ENCODE measurements at regions of chr3 and their contacts with region 1.

Region 1: DNA sequence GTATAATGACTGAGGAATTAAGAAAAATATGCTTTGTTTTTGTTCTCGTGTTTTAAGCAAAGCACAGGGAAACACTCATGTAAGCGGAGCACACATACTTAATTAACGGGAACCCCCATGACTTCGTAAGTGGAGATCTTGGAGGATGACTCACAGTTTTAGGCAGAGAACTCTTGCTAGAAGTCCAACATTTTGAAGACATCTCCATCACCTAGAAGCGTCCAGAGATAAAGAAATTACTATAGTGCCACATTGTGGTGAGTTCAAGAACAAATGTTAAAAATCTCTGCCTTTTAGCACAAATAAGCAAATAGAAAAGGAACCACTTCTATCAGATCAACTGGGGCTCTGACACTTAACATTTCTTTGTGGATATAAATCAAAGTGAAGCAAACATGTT is 194.1 kb upstream of the ARHGEF26 start:
- DNase-seq: peak in 1 of 2 experiments; percentile 3
- H3K4me3 ChIP-seq: no peak overlapping the region
- H3K4me3 Mint-ChIP-seq: no peak overlapping the region
- H3K27ac Mint-ChIP-seq: no peak overlapping the region
- H3K4me1 ChIP-seq: no peaks in the 10 kb centered on the region
- H3K4me1 Mint-ChIP-seq: no peaks in the 10 kb centered on the region
- H3K27me3 ChIP-seq: no peaks in the 10 kb centered on the region
- H3K27me3 Mint-ChIP-seq: peaks cover 6% of the 10 kb centered on the region
- CTCF ChIP-seq: peak in 1 of 2 experiments; percentile 8

Region 2: GRCh38 chr3:153026026-153026425 is 901.1 kb before region 1 on chr3:
- CTCF ChIA-PET with region 1: no interaction called
- POLR2A ChIA-PET with region 1: no interaction called
- intact Hi-C with region 1: loop called (anchors 10 kb)
- DNase-seq: peak in 1 of 2 experiments; percentile 12
- H3K4me3 ChIP-seq: no peak overlapping the region
- H3K4me3 Mint-ChIP-seq: no peak overlapping the region
- H3K27ac Mint-ChIP-seq: no peak overlapping the region
- H3K4me1 ChIP-seq: no peaks in the 10 kb centered on the region
- H3K4me1 Mint-ChIP-seq: no peaks in the 10 kb centered on the region
- H3K27me3 ChIP-seq: no peaks in the 10 kb centered on the region
- H3K27me3 Mint-ChIP-seq: peaks cover 5% of the 10 kb centered on the region
- CTCF ChIP-seq: peak; percentile 49 to 54

Region 3: DNA sequence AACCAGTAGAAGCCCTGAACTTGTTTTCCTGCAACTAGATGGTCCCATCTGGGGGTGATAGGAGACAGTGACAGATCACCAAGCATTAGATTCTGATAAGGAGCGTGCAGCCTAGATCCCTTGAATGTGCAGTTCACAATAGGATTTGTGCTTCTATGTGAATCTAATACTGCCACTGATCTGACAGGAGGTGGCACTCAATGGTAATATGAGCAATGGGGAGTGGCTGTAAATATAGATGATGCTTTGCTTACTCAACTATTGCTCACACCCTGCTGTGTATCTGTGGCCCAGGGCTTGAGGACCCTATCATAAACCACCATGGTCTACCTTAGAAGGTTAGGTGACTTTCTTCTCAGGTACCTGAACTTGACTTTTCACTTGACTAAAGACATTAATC is 223.0 kb before region 1 on chr3:
- CTCF ChIA-PET with region 1: no interaction called
- POLR2A ChIA-PET with region 1: no interaction called
- intact Hi-C with region 1: loop called (anchors 10 kb)
- DNase-seq: no peak
- H3K4me3 ChIP-seq: no peak overlapping the region
- H3K4me3 Mint-ChIP-seq: no peak overlapping the region
- H3K27ac Mint-ChIP-seq: no peak overlapping the region
- H3K4me1 ChIP-seq: no peaks in the 10 kb centered on the region
- H3K4me1 Mint-ChIP-seq: no peaks in the 10 kb centered on the region
- H3K27me3 ChIP-seq: no peaks in the 10 kb centered on the region
- H3K27me3 Mint-ChIP-seq: peaks cover 7% of the 10 kb centered on the region
- CTCF ChIP-seq: no peak

Region 4: DNA sequence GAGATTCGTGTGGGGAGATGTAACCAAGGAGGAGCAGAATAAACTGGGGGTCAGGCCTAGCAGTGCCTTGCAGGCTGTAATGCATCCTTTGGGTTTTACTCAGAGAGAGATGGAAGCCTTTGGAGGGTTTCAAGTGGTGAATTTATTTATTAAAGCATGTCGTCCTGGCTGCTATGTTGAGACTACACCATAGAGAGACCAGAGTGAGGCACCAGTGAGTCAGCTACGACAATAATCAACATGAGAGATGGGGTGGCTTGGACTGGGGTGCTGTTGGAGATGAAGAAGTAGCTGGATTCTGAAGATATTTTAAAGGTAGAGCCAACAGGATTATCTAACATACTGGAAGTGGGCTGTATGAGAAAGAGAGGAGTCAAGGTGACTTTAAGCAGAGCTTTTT is 141.2 kb before region 1 on chr3:
- CTCF ChIA-PET with region 1: no interaction called
- POLR2A ChIA-PET with region 1: no interaction called
- intact Hi-C with region 1: loop called (anchors 2 kb)
- DNase-seq: no peak
- H3K4me3 ChIP-seq: no peak overlapping the region
- H3K4me3 Mint-ChIP-seq: no peak overlapping the region
- H3K27ac Mint-ChIP-seq: no peak overlapping the region
- H3K4me1 ChIP-seq: no peaks in the 10 kb centered on the region
- H3K4me1 Mint-ChIP-seq: no peaks in the 10 kb centered on the region
- H3K27me3 ChIP-seq: no peaks in the 10 kb centered on the region
- H3K27me3 Mint-ChIP-seq: peaks cover 3% of the 10 kb centered on the region
- CTCF ChIP-seq: peak in 1 of 2 experiments; percentile 2

Region 5: DNA sequence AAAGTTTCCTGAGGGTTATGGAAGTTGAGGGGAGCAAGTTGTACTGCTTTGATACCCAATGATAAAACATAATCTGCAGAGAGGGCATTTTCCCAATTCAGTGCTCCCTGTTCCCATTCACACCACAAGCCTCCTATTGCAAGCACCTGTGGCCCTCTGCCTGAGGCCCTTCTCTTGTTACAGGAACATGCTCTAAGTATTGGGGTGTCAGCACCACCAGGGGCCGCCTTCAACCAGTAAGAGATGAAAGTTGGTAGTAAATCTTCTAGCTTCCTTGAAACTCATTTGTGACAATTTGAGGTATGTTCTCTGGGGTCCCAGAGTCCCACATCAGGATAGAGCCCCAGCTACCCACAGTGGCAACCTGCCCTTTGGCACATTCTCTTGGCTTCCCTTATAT is 71.3 kb before region 1 on chr3:
- CTCF ChIA-PET with region 1: no interaction called
- POLR2A ChIA-PET with region 1: no interaction called
- intact Hi-C with region 1: loop called (anchors 1 kb)
- DNase-seq: peak in 1 of 2 experiments; percentile 11
- H3K4me3 ChIP-seq: no peak overlapping the region
- H3K4me3 Mint-ChIP-seq: no peak overlapping the region
- H3K27ac Mint-ChIP-seq: no peak overlapping the region
- H3K4me1 ChIP-seq: no peaks in the 10 kb centered on the region; the same call in 1 of the 2 replicates
- H3K4me1 Mint-ChIP-seq: no peaks in the 10 kb centered on the region
- H3K27me3 ChIP-seq: no peaks in the 10 kb centered on the region
- H3K27me3 Mint-ChIP-seq: no peaks in the 10 kb centered on the region
- CTCF ChIP-seq: peak in 1 of 2 experiments; percentile 13

Region 6: DNA sequence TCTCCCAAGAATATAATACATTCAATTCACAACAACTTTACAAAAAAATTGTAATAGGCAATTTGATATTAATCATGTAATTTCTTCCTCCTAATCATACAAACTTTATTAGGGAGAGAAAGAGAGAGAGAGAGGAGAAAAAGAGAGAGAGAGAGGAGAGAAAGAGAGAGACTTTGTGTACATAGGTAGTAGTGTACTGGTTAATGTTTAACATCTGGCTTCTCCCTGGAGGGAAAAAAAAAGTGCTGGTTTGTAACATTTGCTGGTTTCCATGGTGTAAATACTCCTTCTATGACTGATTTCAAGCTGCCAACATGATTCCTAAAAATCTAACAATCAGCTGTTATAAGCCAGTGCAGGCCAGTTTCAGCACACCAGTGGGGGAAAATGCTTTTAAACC is 96.0 kb after region 1 on chr3:
- CTCF ChIA-PET with region 1: no interaction called
- POLR2A ChIA-PET with region 1: no interaction called
- intact Hi-C with region 1: no loop called
- DNase-seq: peak in 1 of 2 experiments; percentile 51
- H3K4me3 ChIP-seq: no peak overlapping the region
- H3K4me3 Mint-ChIP-seq: no peak overlapping the region
- H3K27ac Mint-ChIP-seq: no peak overlapping the region
- H3K4me1 ChIP-seq: no peaks in the 10 kb centered on the region
- H3K4me1 Mint-ChIP-seq: peaks cover 6% of the 10 kb centered on the region
- H3K27me3 ChIP-seq: no peaks in the 10 kb centered on the region
- H3K27me3 Mint-ChIP-seq: peaks cover 3% of the 10 kb centered on the region
- CTCF ChIP-seq: no peak

Region 7: GRCh38 chr3:154274348-154274747 is 347.2 kb after region 1 on chr3:
- CTCF ChIA-PET with region 1: no interaction called
- POLR2A ChIA-PET with region 1: no interaction called
- intact Hi-C with region 1: no loop called
- DNase-seq: no peak
- H3K4me3 ChIP-seq: no peak overlapping the region
- H3K4me3 Mint-ChIP-seq: no peak overlapping the region
- H3K27ac Mint-ChIP-seq: no peak overlapping the region
- H3K4me1 ChIP-seq: no peaks in the 10 kb centered on the region
- H3K4me1 Mint-ChIP-seq: no peaks in the 10 kb centered on the region
- H3K27me3 ChIP-seq: no peaks in the 10 kb centered on the region
- H3K27me3 Mint-ChIP-seq: no peaks in the 10 kb centered on the region
- CTCF ChIP-seq: no peak

Measured in Caco-2 (cell line).